ENCODE measurements at regions of chr2 and their contacts with region 1.

Region 1: GRCh38 chr2:197216361-197216979 is 94.1 kb downstream of the ANKRD44 start:
- DNase-seq: no peak
- H3K4me3 ChIP-seq: peak overlapping the region in 1 of 2 donors; percentile 16
- H3K4me3 Mint-ChIP-seq: peak overlapping the region; percentile 62 to 90 (median 75)
- H3K27ac ChIP-seq: peak overlapping the region; percentile 68
- H3K27ac Mint-ChIP-seq: peak overlapping the region; percentile 88 to 99 (median 94)
- H3K4me1 ChIP-seq: peaks cover 92% of the 10 kb centered on the region
- H3K4me1 Mint-ChIP-seq: peaks cover 59 to 89% (median 79%) of the 10 kb centered on the region in 4 donors
- H3K27me3 ChIP-seq: no peaks in the 10 kb centered on the region
- H3K27me3 Mint-ChIP-seq: peaks cover 0 to 3% of the 10 kb centered on the region in 2 donors

Region 2: DNA sequence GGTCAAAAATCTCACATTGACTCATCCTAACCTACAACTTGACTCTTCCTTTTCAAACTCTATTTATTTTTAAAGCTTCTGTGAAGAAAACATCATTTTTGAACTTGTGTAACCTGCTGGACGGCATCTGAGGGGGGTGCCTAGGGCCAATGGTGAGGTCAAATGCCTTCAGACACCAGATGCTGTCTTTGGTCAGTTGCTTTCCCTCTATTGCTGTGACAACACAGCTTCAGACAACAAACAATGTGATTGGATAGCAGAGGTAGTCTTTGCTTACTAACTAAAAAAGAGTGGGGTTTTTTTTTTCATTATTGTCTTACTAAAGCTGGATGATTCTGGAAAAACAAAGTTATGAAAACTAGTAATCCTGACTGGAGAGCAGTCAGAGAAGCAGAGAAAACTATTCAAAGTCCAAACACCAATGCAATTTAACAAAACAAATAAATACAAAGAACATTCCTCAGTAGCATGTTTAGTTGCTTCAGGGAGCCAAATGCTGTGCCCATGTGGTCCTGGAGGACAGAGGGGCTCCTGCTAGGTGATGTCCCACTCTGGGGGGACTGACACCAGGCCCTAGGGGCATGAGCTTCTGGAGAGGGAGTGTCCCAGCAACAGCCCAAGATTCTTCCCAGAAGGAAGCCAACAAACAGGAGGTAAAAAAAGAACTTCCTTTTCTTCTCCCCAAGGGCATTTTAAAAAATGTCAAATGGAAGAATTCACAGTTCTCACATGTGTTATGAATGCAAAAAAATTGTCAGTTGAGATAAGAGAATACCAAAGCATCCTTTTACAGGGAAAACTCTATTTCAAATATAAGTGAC is 109.0 kb before region 1 on chr2:
- CTCF ChIA-PET with region 1: no interaction called
- POLR2A ChIA-PET with region 1: no interaction called
- intact Hi-C with region 1: no loop called
- DNase-seq: no peak
- H3K4me3 ChIP-seq: no peak overlapping the region
- H3K4me3 Mint-ChIP-seq: no peak overlapping the region
- H3K27ac ChIP-seq: no peak overlapping the region
- H3K27ac Mint-ChIP-seq: peak overlapping the region in 5 of 7 donors; percentile 17 to 82 (median 21)
- H3K4me1 ChIP-seq: no peaks in the 10 kb centered on the region
- H3K4me1 Mint-ChIP-seq: peaks cover 3 to 7% (median 3%) of the 10 kb centered on the region in 4 donors
- H3K27me3 ChIP-seq: no peaks in the 10 kb centered on the region
- H3K27me3 Mint-ChIP-seq: no peaks in the 10 kb centered on the region

Region 3: DNA sequence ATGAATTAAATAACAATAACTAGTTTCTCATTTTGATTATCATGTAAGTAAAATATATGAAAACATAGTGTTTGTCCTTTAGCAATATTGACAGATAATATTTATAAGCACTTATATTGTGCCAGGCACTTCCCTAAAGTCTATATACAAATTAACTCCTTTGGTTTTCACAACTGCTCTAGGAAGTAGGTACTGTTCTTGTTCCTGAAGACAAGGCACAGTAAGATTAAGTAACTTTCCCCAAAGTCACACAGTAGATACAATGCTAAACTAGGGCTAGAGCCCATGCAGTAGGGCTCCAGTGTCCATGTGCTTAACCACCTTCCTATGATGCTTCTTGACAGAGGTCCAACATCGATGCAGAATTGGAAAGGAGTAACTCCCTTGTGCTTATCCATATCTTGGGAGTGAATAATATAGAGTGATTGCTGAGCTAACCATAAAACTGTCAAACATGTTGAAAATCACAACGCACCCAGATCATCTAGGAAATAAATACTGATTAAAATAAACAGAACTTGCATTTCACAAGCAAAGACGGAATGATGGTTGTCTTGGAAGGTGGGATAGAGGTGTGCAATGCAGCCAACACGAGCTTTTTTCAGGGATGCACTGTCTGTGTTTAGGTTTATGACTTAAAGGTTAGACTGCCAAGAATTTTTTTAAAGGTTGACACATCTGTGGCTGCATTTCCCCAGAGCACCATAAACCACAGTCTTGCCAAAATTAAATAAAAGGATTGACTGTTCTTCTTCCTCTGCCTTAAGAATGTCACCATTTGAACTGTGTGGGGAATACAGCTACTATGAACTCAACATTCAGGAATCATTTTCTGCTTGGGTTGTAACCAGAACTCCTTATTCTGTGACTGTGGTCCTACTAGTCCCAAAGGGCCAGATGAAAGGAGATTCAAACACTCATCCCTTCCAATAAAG is 13.3 kb after region 1 on chr2:
- CTCF ChIA-PET with region 1: interaction called, 11 read pairs
- POLR2A ChIA-PET with region 1: interaction called, 1,394 read pairs
- intact Hi-C with region 1: loop called (anchors 2 kb)
- DNase-seq: no peak
- H3K4me3 ChIP-seq: no peak overlapping the region
- H3K4me3 Mint-ChIP-seq: peak overlapping the region in 5 of 8 donors; percentile 11 to 71 (median 29)
- H3K27ac ChIP-seq: no peak overlapping the region
- H3K27ac Mint-ChIP-seq: peak overlapping the region; percentile 22 to 65 (median 38)
- H3K4me1 ChIP-seq: peaks cover 99% of the 10 kb centered on the region
- H3K4me1 Mint-ChIP-seq: peaks cover 65 to 98% (median 85%) of the 10 kb centered on the region in 4 donors
- H3K27me3 ChIP-seq: no peaks in the 10 kb centered on the region
- H3K27me3 Mint-ChIP-seq: no peaks in the 10 kb centered on the region

Region 4: DNA sequence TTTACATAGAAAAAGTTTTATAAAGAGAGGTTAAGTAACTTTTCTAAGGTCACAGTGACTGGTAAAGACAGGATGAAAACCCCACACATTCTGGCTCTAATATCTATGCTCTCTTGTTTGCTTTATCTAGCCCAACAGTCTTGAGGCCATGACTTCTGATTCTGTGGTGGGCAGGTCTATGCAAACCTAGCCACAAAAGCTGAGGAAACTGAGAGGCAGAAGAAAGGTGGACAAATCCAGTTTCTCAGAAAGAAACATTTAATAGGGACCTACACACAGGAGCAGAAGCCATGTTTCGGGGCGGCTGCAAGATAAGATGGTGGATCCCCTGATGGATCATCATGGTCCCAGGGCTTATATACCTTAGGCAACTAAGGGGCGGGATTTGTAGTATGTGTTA is 261.3 kb after region 1 on chr2:
- CTCF ChIA-PET with region 1: no interaction called
- POLR2A ChIA-PET with region 1: no interaction called
- intact Hi-C with region 1: no loop called
- DNase-seq: no peak
- H3K4me3 ChIP-seq: no peak overlapping the region
- H3K4me3 Mint-ChIP-seq: no peak overlapping the region
- H3K27ac ChIP-seq: no peak overlapping the region
- H3K27ac Mint-ChIP-seq: peak overlapping the region in 3 of 7 donors; percentile 19 to 76 (median 24)
- H3K4me1 ChIP-seq: no peaks in the 10 kb centered on the region
- H3K4me1 Mint-ChIP-seq: peaks cover 0 to under 1% (median under 1%) of the 10 kb centered on the region in 4 donors
- H3K27me3 ChIP-seq: no peaks in the 10 kb centered on the region
- H3K27me3 Mint-ChIP-seq: no peaks in the 10 kb centered on the region

Region 5: DNA sequence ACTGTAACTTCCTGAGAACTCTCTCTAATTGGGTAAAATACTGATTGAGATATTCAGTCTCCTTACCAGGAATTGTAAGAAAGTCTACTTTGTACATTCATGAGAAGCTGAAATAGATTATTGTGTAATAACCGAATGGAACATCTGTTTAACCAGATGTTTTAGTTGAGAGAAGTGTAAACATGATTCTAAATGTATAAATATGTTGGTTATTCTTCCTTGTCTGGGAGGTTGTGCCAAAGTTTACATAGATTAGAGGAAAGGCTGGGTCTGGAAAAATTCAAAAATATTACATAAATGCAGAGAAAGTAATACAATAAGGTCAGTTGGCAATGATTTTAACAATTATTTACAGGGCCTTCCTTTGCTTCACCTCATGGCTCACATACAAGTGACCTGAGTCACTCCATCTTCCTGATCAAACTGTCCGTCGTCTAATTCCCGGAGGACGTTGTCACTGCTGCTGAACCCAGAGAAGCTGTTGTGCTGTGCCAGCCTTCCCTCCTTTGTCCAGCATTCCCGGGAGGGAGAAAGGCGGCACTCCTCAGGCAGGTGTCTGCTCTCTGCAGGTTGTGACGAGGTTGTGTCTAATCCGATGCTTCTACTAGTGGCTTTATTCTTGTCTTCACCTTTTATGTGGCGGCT is 355.3 kb after region 1 on chr2:
- CTCF ChIA-PET with region 1: no interaction called
- POLR2A ChIA-PET with region 1: no interaction called
- intact Hi-C with region 1: no loop called
- DNase-seq: no peak
- H3K4me3 ChIP-seq: no peak overlapping the region
- H3K4me3 Mint-ChIP-seq: no peak overlapping the region
- H3K27ac ChIP-seq: no peak overlapping the region
- H3K27ac Mint-ChIP-seq: peak overlapping the region in 1 of 7 donors; percentile 37
- H3K4me1 ChIP-seq: no peaks in the 10 kb centered on the region
- H3K4me1 Mint-ChIP-seq: no peaks in the 10 kb centered on the region
- H3K27me3 ChIP-seq: no peaks in the 10 kb centered on the region
- H3K27me3 Mint-ChIP-seq: no peaks in the 10 kb centered on the region

Measured in CD4-positive, alpha-beta memory T cell (primary cell).